Tibial artery (tissue), 4 donors: ENCODE measurements at regions of chr15 and their contacts with region 1.

Region 1: GRCh38 chr15:68672781-68673205 is 94.0 kb downstream of the CORO2B start:
- DNase-seq: peak in 1 of 2 donors; percentile 60
- H3K4me3 ChIP-seq: no peak overlapping the region
- H3K27ac ChIP-seq: no peak overlapping the region
- H3K4me1 ChIP-seq: no peaks in the 10 kb centered on the region
- H3K27me3 ChIP-seq: peaks cover 0 to 6% of the 10 kb centered on the region in 2 donors
- CTCF ChIP-seq: no peak

Region 2: DNA sequence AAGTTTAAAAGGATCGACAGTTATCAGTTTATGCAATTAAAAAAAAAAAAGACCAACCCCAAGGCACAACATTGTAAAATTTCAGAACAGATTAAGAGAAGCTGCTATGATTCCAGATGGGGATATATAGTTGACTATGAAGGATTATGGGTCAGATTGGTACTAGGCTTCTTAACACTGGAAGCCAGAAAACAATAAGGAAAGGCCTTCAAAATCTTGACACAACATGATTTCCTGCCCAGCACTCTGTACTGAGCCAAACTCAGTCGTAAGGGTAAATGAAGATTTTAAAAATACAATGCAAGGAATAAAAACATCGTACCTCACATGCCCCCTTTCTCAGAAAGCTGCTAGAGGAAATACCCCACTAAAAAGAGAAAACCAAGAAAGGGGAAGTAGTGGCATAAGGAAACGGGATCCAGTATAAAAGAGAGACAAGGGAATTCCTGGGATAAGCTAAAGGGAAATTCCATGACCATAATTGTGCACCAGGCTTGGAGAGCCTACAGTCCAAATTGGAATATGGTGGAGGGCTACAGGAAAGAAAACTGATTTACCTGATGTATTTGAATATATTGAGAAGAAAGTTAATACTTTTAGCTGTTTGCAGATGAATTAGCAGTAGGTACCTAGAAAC is 590.8 kb before region 1 on chr15:
- intact Hi-C with region 1: no loop called
- DNase-seq: no peak
- H3K4me3 ChIP-seq: no peak overlapping the region
- H3K27ac ChIP-seq: no peak overlapping the region
- H3K4me1 ChIP-seq: peaks cover 0 to 73% (median 18%) of the 10 kb centered on the region in 4 donors
- H3K27me3 ChIP-seq: no peaks in the 10 kb centered on the region
- CTCF ChIP-seq: no peak

Region 3: GRCh38 chr15:68252925-68253534 is 419.8 kb before region 1 on chr15:
- intact Hi-C with region 1: loop called (anchors 2 kb)
- DNase-seq: peak in 1 of 2 donors; percentile 44
- H3K4me3 ChIP-seq: no peak overlapping the region
- H3K27ac ChIP-seq: no peak overlapping the region
- H3K4me1 ChIP-seq: peaks cover 0 to 16% (median 12%) of the 10 kb centered on the region in 4 donors
- H3K27me3 ChIP-seq: no peaks in the 10 kb centered on the region
- CTCF ChIP-seq: peak; percentile 91 to 93

Region 4: DNA sequence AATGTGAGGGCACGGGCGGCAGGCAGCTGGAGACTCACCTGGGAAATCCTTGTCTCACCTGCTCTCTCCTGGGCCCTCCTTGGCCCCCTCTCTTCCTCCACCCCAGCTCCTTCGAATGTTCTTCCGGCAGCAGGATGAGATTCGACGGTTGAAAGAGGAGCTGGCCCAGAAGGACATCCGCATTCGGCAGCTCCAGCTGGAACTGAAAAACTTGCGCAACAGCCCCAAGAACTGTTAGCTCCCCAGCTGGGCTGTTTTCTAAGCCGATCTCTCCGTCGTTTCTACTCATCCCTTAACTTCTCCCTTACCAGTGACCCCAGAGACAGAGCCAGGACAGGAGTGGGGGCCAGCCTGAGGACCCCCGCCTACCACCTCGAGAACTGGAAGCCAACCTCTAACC is 52.9 kb after region 1 on chr15:
- intact Hi-C with region 1: no loop called
- DNase-seq: peak; percentile 60 to 74
- H3K4me3 ChIP-seq: no peak overlapping the region
- H3K27ac ChIP-seq: no peak overlapping the region
- H3K4me1 ChIP-seq: peaks cover 0 to 13% (median 8%) of the 10 kb centered on the region in 4 donors
- H3K27me3 ChIP-seq: peaks cover 0 to 2% of the 10 kb centered on the region in 2 donors
- CTCF ChIP-seq: no peak